H1 (cell line): ENCODE measurements at regions of chr1 and their contacts with region 1.

Region 1: DNA sequence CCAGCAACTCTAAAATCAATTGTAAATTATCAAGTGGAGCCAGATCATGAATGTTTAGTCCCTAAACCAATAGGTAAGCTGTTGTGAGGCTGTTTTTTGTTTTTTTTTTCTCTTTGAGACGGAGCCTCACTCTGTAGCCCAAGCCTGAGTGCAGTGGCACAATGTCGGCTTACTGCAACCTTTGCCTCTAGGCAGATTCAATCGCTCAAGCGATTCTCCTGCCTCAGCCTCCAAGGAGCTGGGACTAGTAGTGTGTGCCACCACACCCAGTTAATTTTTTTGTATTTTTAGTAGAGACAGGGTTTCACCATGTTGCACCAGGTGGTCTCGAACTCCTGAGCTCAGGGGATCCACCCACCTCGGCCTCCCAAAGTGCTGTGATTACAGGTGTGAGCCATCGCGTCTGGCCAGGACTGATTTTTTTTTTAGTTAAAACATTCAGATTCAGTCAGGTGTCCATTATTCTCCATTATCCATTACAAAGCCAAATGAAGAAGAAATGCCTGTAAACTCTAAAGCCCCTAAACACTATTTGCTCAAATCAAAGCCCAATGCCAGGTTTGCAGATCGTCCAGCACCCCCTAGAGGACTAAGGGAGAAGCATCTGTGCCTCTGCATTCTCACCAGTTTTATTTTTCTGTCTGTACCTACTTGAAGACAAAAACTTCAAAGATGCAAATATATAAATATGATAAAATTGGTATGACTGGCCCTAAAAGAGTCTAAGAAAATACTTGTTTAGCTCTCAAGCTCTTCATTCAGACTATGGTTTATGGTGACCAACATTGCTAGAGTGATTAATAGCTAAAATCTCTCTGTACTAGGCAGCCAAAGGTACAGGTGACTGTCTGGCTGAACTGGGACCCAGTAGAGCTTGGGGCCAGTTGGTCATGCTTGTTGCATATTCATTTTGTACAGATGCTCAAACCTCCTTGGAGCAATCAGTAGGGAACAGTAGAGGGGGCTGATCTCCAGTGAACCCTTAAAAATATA is 138.6 kb downstream of the SYT2 start:
- DNase-seq: no peak
- H3K4me3 ChIP-seq: no peak overlapping the region
- H3K27ac ChIP-seq: no peak overlapping the region
- H3K4me1 ChIP-seq: peaks cover 12 to 18% (median 14%) of the 10 kb centered on the region in 4 experiments; a peak in 6 of 7 replicates
- H3K27me3 ChIP-seq: no peaks in the 10 kb centered on the region
- CTCF ChIP-seq: peak; percentile 57 to 84 (median 78)
- EP300 ChIP-seq: no peak
- POLR2A ChIP-seq: no peak
- RAD21 ChIP-seq: peak; percentile 87 to 92

Region 2: GRCh38 chr1:202471246-202471645 is 100.4 kb before region 1 on chr1:
- CTCF ChIA-PET with region 1: interaction called, 14 read pairs
- POLR2A ChIA-PET with region 1: no interaction called
- DNase-seq: no peak
- H3K4me3 ChIP-seq: no peak overlapping the region
- H3K27ac ChIP-seq: no peak overlapping the region
- H3K4me1 ChIP-seq: no peaks in the 10 kb centered on the region
- H3K27me3 ChIP-seq: no peaks in the 10 kb centered on the region
- CTCF ChIP-seq: no peak
- EP300 ChIP-seq: no peak
- POLR2A ChIP-seq: no peak
- RAD21 ChIP-seq: no peak

Region 3: DNA sequence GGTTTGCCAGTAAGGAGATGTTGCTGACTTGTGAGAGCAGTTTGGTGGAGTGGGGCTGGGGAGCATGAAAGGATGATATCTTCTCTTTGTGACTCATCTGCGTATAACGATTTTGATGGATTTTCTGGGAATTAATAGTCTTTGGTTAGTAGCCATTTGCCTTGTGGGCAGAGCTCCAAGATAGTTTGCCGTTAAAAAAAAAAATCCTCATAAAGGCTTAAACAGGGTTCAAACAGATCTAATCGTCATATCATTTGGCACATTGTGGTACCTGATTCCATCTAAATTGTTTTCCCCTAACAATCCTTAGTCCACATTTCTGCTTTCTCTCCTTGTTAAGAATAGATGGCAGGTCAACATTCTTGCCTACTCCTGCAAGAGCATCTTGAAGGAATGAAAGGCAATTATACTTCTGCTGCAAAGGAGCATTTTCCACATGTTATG is 55.2 kb before region 1 on chr1:
- CTCF ChIA-PET with region 1: interaction called, 10 read pairs
- POLR2A ChIA-PET with region 1: no interaction called
- DNase-seq: no peak
- H3K4me3 ChIP-seq: no peak overlapping the region
- H3K27ac ChIP-seq: no peak overlapping the region
- H3K4me1 ChIP-seq: no peaks in the 10 kb centered on the region
- H3K27me3 ChIP-seq: no peaks in the 10 kb centered on the region
- CTCF ChIP-seq: no peak
- EP300 ChIP-seq: no peak
- POLR2A ChIP-seq: no peak
- RAD21 ChIP-seq: no peak

Region 4: GRCh38 chr1:202589190-202590030 is 17.8 kb after region 1 on chr1:
- CTCF ChIA-PET with region 1: interaction called, 18 read pairs
- POLR2A ChIA-PET with region 1: interaction called, 4 read pairs
- DNase-seq: peak in 1 of 2 experiments; percentile 77
- H3K4me3 ChIP-seq: no peak overlapping the region
- H3K27ac ChIP-seq: no peak overlapping the region
- H3K4me1 ChIP-seq: no peaks in the 10 kb centered on the region
- H3K27me3 ChIP-seq: no peaks in the 10 kb centered on the region; a peak in 1 of 7 replicates
- CTCF ChIP-seq: no peak
- EP300 ChIP-seq: no peak
- POLR2A ChIP-seq: no peak
- RAD21 ChIP-seq: no peak

Region 5: DNA sequence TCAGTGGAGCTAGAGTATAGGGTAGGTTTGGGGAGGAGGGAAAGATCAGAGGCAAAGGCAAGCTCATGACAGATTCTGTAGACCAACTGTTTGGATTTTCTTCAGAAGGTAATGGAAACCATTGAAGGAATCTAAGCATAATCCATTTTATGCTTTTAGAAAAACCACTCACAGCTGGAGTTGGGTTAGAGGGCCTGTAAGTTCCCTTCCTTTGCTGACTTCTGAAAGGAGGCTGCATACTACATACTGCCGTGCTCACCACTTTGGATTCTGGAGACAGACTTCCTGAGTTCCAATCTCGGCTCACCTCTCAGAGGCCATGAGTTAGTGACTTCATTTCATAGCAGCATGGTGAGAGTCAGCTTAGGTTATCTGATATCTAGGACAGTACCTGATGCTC is 145.0 kb after region 1 on chr1:
- CTCF ChIA-PET with region 1: interaction called, 19 read pairs
- POLR2A ChIA-PET with region 1: no interaction called
- DNase-seq: no peak
- H3K4me3 ChIP-seq: no peak overlapping the region
- H3K27ac ChIP-seq: no peak overlapping the region
- H3K4me1 ChIP-seq: peaks cover 7 to 15% (median 13%) of the 10 kb centered on the region in 4 experiments
- H3K27me3 ChIP-seq: no peaks in the 10 kb centered on the region; a peak in 1 of 7 replicates
- CTCF ChIP-seq: no peak
- EP300 ChIP-seq: no peak
- POLR2A ChIP-seq: no peak
- RAD21 ChIP-seq: no peak